PC-9 (cell line): ENCODE measurements at regions of chr2 and their contacts with region 1.

Region 1: GRCh38 chr2:47218066-47218581 is 63.0 kb upstream of the STPG4 start:
- DNase-seq: peak; percentile 73 to 93
- H3K4me3 ChIP-seq: no peak overlapping the region
- H3K27ac ChIP-seq: peak overlapping the region; percentile 25; the same call in 1 of the 2 replicates
- H3K4me1 ChIP-seq: peaks cover 47% of the 10 kb centered on the region
- H3K27me3 ChIP-seq: no peaks in the 10 kb centered on the region
- CTCF ChIP-seq: no peak

Region 2: GRCh38 chr2:47070920-47071824 is 147.0 kb before region 1 on chr2:
- CTCF ChIA-PET with region 1: no interaction called
- POLR2A ChIA-PET with region 1: no interaction called
- intact Hi-C with region 1: no loop called
- DNase-seq: peak; percentile 59 to 68
- H3K4me3 ChIP-seq: no peak overlapping the region
- H3K27ac ChIP-seq: peak overlapping the region; percentile 27
- H3K4me1 ChIP-seq: peaks cover 66% of the 10 kb centered on the region
- H3K27me3 ChIP-seq: no peaks in the 10 kb centered on the region
- CTCF ChIP-seq: no peak

Region 3: DNA sequence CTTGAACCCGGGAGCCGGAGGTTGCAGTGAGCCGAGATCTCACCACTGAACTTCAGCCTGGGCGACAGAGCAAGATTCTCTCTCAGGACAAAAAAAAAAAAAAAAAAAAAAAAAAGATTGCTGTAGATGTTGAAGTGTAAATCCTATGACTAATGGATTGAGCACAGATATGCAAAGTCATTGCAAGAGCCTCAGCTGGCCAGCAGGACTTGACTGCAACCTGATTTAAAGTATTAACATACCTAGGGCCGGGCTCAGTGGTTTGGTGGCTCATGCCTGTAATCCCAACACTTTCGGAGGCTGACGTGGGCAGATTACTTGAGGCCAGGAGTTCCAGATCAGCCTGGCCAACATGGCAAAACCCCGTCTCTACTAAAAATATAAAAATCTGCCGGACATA is 81.4 kb after region 1 on chr2:
- CTCF ChIA-PET with region 1: interaction called, 11 read pairs
- POLR2A ChIA-PET with region 1: no interaction called
- intact Hi-C with region 1: no loop called
- DNase-seq: peak; percentile 59 to 89
- H3K4me3 ChIP-seq: no peak overlapping the region
- H3K27ac ChIP-seq: peak overlapping the region; percentile 48; the same call in 1 of the 2 replicates
- H3K4me1 ChIP-seq: peaks cover 33% of the 10 kb centered on the region
- H3K27me3 ChIP-seq: no peaks in the 10 kb centered on the region
- CTCF ChIP-seq: no peak